Gastrocnemius medialis (tissue), 4 donors: ENCODE measurements at regions of chr11 and their contacts with region 1.

Region 1: DNA sequence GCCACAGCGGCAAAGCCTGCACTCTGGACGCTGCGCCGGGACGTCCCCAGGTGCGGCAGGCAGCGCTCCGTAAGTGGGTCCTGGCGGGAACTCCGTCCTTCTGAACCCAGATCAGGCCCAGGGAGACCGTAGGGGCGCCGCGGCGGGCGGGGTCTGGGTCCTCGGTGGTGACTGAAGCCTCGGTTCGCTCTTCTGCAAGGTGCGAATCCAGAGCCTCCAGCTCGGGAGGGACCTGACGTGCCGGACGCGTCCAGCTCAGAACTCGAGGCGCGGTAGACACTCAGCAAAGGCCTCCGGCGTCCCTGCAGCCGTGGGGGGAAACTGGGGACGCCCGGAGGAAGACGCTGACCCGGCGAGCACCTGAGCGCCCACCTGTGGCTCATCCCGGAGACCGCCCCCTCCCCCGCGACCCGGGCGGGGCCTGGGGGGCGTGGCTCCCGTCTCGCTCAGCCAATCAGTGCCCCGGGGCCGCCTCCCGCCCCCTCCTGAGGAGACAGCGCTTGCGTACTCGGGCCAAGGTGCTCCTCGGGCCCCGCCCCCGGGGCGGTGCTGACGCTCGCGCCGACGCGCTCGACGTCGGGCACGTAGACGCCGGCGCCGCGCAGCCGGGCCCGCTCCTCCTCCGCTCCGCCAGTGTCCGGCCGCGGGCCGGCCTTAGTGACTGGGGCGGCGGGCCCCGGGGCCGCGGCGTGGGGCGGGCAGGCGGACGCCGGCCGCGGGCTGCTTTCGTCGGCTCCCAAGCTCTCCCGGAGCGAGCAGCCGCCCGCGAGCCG is at the start of gene PPFIA1:
- DNase-seq: peak; percentile 93 to 94
- ATAC-seq: peak; percentile 95 to 96
- H3K4me3 ChIP-seq: peak within 1 kb of the TSS; percentile 74 to 95 (median 82)
- H3K27ac ChIP-seq: peak within 1 kb of the TSS; percentile 80 to 95 (median 86)
- H3K4me1 ChIP-seq: peaks cover 26 to 35% of the 10 kb centered on the region in 2 donors
- H3K27me3 ChIP-seq: peaks cover 0 to 6% (median 2%) of the 10 kb centered on the region in 3 donors
- CTCF ChIP-seq: no peak
- POLR2A ChIP-seq: peak; percentile 98 to 99
- total RNA-seq, gene PPFIA1: 36.3 to 90.6 (median 46.0) TPM

Region 2: GRCh38 chr11:70326365-70326811 is 56.1 kb after region 1 on chr11:
- in situ Hi-C with region 1: no loop called
- intact Hi-C with region 1: loop called (anchors 2 kb)
- DNase-seq: peak; percentile 10 to 35
- ATAC-seq: peak; percentile 80 to 87
- H3K4me3 ChIP-seq: no peak overlapping the region
- H3K27ac ChIP-seq: peak overlapping the region; percentile 40 to 68 (median 58)
- H3K4me1 ChIP-seq: peaks cover 12 to 22% of the 10 kb centered on the region in 2 donors
- H3K27me3 ChIP-seq: no peaks in the 10 kb centered on the region
- CTCF ChIP-seq: no peak
- POLR2A ChIP-seq: no peak

Region 3: DNA sequence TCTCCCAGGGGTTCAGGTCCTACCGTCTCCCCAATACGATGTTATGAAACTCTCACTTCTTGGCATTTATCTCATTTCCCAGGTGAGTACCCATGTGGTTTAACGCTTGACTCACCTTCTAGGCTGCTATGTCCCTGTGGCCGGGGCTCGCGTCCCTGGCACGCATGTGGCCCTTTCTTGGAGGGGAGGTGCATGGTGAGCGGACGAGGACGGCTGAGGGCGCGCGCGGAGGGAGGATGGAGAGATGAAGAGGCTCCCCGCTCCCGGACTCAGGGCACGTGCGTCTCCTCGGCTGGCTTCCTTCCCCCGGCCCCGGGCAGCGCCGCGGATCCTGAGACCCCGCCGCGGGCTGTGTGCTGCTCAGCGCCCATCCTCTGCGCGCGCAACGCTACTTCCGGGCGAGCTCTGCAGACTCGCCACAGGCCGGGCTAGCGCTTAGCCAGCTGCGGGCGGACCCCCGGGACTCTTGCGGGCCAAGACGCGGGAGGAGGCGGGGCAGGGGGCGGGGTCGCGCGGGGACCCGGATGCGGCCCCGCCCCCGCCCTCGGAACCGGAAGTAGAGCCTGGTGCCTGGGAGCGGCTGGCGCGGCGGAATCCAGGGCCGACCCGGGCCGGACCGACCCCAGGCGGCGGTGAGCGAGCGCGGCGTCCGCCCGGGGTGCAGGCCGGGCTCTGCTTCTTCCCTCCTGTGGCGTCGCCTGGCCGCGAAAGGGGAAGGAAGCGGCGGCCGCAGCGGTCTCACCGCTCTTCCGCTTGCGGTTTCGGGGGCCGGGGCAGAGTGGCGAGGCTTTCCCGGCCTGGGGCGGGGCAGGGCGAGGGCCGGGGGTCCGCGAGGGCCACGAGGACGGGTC is 127.9 kb after region 1 on chr11 and contains the start of gene CTTN:
- in situ Hi-C with region 1: no loop called
- intact Hi-C with region 1: loop called (anchors 5 kb)
- DNase-seq: peak; percentile 56 to 76
- ATAC-seq: peak; percentile 67 to 72
- H3K4me3 ChIP-seq: peak within 1 kb of the TSS; percentile 78 to 99 (median 89)
- H3K27ac ChIP-seq: peak within 1 kb of the TSS; percentile 90 to 97 (median 95)
- H3K4me1 ChIP-seq: peaks cover 24 to 30% of the 10 kb centered on the region in 2 donors
- H3K27me3 ChIP-seq: no peaks in the 10 kb centered on the region
- CTCF ChIP-seq: no peak
- POLR2A ChIP-seq: peak; percentile 95 to 96
- total RNA-seq, gene CTTN: 92.8 to 226 (median 134) TPM